Activated CD4-positive, alpha-beta T cell treated with anti-CD3 and anti-CD28 coated beads for 36 hours (primary cell): ENCODE measurements at regions of chr4 and their contacts with region 1.

Region 1: GRCh38 chr4:17576932-17577665 is at the start of gene LAP3:
- DNase-seq: peak; percentile 99
- ATAC-seq: peak; percentile 85
- H3K4me3 Mint-ChIP-seq: peak within 1 kb of the TSS; percentile 91
- H3K27ac Mint-ChIP-seq: peak within 1 kb of the TSS; percentile 94
- H3K4me1 Mint-ChIP-seq: peaks cover 29% of the 10 kb centered on the region
- H3K27me3 Mint-ChIP-seq: no peaks in the 10 kb centered on the region
- total RNA-seq, gene LAP3: 126 to 128 TPM

Region 2: DNA sequence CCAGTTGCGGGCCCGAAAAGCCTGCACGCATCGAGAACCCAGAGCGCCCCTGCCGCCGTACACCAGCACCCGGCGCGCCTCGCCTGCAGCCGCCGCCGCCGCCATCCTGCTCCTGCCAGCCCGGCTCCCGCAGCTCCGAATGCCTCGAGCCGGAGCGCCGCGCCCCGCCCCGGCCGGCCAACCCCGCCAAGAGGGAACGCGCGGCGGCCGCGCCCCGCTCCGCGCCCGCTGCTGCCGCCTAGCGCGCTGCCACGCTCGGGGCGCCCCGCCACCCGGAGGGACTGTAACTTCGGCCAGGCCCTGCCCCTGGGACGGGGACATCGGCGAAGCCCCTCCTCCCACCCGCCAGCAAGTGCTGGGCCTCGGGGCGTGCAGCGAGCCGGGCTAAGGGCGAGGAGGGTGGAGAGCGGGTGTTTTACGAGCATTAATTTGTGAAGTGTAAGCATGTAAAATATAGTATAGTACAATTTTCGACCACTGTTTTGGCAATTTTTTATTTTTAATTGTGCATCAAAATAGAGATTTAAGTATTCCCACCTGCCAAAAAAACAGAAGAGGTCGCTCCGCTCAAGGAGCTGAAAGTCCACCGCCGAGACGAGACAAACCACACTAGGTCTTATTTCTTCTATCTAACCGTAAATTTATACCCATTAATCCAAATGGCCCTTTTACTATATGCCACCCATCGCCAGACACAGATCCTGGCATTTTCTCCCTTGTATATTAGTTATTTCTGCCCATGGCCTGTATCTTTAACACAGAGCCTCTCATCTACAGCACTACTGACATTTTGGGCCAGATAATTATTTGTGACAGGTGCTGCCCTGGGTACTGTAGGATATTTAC is 64.9 kb before region 1 on chr4 and contains the start of gene QDPR:
- CTCF ChIA-PET with region 1: interaction called, 3 read pairs
- POLR2A ChIA-PET with region 1: interaction called, 3 read pairs
- intact Hi-C with region 1: loop called (anchors 1 to 2 kb)
- DNase-seq: peak; percentile 88
- ATAC-seq: peak; percentile 95
- H3K4me3 Mint-ChIP-seq: peak within 1 kb of the TSS; percentile 78
- H3K27ac Mint-ChIP-seq: peak within 1 kb of the TSS; percentile 85
- H3K4me1 Mint-ChIP-seq: peaks cover 23% of the 10 kb centered on the region
- H3K27me3 Mint-ChIP-seq: no peaks in the 10 kb centered on the region
- total RNA-seq, gene QDPR: 34.5 to 34.6 TPM

Region 3: DNA sequence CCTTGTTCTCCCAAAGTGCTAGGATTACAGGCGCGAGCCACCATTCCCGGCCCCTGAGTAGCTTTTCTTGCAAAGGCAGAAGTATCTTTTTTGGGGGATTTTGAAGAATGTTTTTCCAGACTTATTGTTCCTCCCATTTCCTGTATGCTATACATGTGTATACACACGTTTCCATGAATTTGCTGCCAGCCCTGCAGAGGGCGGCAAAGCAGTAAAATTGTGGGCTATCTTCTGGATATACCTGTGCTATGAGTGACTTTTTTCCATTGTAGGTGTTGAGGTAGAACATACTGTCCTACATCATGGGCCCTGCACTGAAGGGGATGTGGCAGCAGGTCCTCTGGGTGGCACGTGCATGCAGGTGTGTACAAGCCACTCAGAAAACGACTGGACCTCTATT is 20.4 kb after region 1 on chr4:
- CTCF ChIA-PET with region 1: no interaction called
- POLR2A ChIA-PET with region 1: no interaction called
- intact Hi-C with region 1: no loop called
- DNase-seq: peak; percentile 21
- ATAC-seq: peak; percentile 19
- H3K4me3 Mint-ChIP-seq: no peak overlapping the region
- H3K27ac Mint-ChIP-seq: no peak overlapping the region
- H3K4me1 Mint-ChIP-seq: peaks cover 4% of the 10 kb centered on the region
- H3K27me3 Mint-ChIP-seq: no peaks in the 10 kb centered on the region